Colonic mucosa (tissue), 4 donors: ENCODE measurements at regions of chr11 and their contacts with region 1.

Region 1: GRCh38 chr11:108474664-108475485 is 7.5 kb upstream of the C11orf65 start:
- DNase-seq: no peak
- H3K4me3 ChIP-seq: no peak overlapping the region
- H3K27ac ChIP-seq: no peak overlapping the region
- H3K4me1 ChIP-seq: no peaks in the 10 kb centered on the region
- H3K27me3 ChIP-seq: no peaks in the 10 kb centered on the region
- CTCF ChIP-seq: no peak

Region 2: GRCh38 chr11:108253176-108253575 is 221.7 kb before region 1 on chr11:
- intact Hi-C with region 1: no loop called
- DNase-seq: no peak
- H3K4me3 ChIP-seq: no peak overlapping the region
- H3K27ac ChIP-seq: no peak overlapping the region
- H3K4me1 ChIP-seq: no peaks in the 10 kb centered on the region
- H3K27me3 ChIP-seq: no peaks in the 10 kb centered on the region
- CTCF ChIP-seq: no peak

Region 3: DNA sequence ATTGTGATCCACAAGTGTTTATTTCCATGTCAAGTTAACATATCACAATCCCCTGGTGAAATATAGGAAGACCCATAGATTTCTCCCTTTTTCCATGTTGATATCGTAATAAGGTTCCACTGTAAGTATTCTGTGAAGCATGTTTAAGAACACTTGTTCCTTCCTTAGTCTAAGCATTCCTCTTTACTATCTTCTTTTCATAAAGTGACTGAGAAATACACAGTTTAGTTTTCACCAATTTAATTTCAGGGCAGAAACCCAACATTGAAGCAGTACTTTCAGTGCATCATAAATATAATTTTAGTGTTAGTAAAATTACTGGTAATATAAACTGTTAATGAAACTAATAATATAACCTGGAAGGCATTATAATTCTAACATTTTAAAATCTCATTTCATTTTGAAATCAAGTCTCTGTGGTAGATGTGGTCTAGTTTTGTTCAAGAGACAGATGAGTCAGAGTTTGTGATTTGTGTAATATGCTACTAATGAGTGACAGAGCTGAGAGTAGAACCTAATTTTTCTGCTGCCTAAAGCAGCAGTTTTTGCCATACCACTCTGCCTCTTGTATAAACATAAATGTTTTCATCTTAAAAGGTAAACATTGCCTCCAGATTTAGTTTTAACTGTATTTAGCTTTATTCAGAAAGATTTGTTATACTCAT is 172.6 kb before region 1 on chr11:
- intact Hi-C with region 1: loop called (anchors 10 kb)
- DNase-seq: no peak
- H3K4me3 ChIP-seq: no peak overlapping the region
- H3K27ac ChIP-seq: no peak overlapping the region
- H3K4me1 ChIP-seq: no peaks in the 10 kb centered on the region
- H3K27me3 ChIP-seq: no peaks in the 10 kb centered on the region
- CTCF ChIP-seq: no peak

Region 4: DNA sequence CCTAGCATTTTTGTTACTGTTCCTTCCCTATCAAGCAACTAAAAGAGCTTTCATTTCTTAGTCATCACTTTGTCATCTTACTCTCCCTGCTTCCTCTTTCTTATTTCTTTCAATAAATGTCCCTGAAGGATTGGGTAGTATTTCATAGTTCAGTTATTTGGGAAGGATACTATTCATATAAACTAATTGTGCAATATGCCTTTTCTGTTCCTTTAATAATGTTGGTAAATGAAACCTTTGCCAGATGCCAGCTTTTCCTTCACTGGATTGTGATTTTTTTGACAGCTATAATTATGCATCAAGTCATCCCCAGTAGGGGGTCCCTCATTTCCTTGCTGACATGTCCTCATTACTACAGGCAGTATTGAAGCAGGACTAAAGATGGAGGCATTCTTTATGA is 150.3 kb before region 1 on chr11:
- intact Hi-C with region 1: no loop called
- DNase-seq: no peak
- H3K4me3 ChIP-seq: no peak overlapping the region
- H3K27ac ChIP-seq: no peak overlapping the region
- H3K4me1 ChIP-seq: no peaks in the 10 kb centered on the region
- H3K27me3 ChIP-seq: no peaks in the 10 kb centered on the region
- CTCF ChIP-seq: no peak